ENCODE measurements at regions of chr21 and their contacts with region 1.

Region 1: GRCh38 chr21:42079939-42080787 is 9.0 kb downstream of the UMODL1 start:
- DNase-seq: no peak
- ATAC-seq: peak in 2 of 8 donors; percentile 15 to 16
- H3K4me3 ChIP-seq: no peak overlapping the region
- H3K27ac ChIP-seq: no peak overlapping the region
- H3K4me1 ChIP-seq: peaks cover 0 to 20% (median 0%) of the 10 kb centered on the region in 9 donors
- H3K27me3 ChIP-seq: peaks cover 0 to 28% (median 0%) of the 10 kb centered on the region in 7 donors
- CTCF ChIP-seq: no peak

Region 2: DNA sequence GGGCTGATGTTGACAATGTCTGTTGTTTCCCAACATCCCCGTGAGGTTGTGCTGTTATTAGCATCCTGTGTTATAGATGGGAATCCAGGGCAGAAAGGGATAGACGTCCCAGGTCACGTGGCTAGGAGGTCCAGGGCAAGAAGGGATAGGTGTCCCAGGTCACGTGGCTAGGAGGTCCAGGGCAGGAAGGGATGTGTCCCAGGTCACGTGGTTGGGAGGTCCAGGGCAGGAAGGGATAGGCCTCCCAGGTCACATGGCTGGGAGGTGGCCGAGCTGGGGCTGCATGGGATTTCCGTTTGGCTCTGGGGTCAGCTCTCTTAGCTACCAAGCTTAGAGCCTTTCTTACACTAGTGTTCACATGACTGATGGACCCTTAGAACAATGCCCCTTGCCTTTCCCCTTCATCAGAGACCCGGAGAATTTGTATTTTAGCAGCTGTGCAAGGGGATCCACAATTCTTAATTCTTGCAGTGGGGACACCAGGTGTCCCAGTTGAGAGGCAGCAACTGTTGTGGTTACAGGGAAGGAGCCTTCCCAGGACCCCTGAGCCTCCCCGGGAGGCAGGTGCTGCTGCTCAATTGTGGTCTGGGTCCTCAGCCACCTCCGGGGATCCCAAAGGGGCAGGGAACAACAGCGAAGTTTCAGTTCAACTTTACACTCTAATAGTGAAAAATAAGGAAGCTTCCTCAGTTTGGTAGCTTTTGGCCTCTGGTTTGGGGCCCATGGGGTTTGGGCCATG is 60.2 kb after region 1 on chr21:
- intact Hi-C with region 1: no loop called
- DNase-seq: no peak
- ATAC-seq: peak in 5 of 8 donors; percentile 23 to 57 (median 36)
- H3K4me3 ChIP-seq: no peak overlapping the region
- H3K27ac ChIP-seq: no peak overlapping the region
- H3K4me1 ChIP-seq: peaks cover 0 to 6% (median 0%) of the 10 kb centered on the region in 9 donors
- H3K27me3 ChIP-seq: peaks cover 0 to 24% (median 0%) of the 10 kb centered on the region in 7 donors
- CTCF ChIP-seq: no peak

Region 3: GRCh38 chr21:42939582-42940410 is 859.6 kb after region 1 on chr21:
- intact Hi-C with region 1: loop called in 1 of 10 experiments (anchors 10 kb)
- DNase-seq: peak in 1 of 2 donors; percentile 86
- ATAC-seq: peak; percentile 91 to 99 (median 95)
- H3K4me3 ChIP-seq: peak overlapping the region in 4 of 10 donors; percentile 25 to 36 (median 32)
- H3K27ac ChIP-seq: peak overlapping the region in 8 of 10 donors; percentile 42 to 71 (median 64)
- H3K4me1 ChIP-seq: peaks cover 0 to 16% (median 7%) of the 10 kb centered on the region in 9 donors
- H3K27me3 ChIP-seq: no peaks in the 10 kb centered on the region
- CTCF ChIP-seq: no peak